Activated T-helper 1 cell treated with anti-CD3 and anti-CD28 coated beads, Interleukin-12 subunit alpha, Interleukin-12 subunit beta, Interleukin-2, Interleukin-4 antibody, amounts not matched to agents 30 ng/mL and 10 ng/mL and 1 ng/mL, durations not matched to agents 14 hours and 24 hours and 36 hours (primary cell): ENCODE measurements at regions of chr12 and their contacts with region 1.

Region 1: GRCh38 chr12:9364224-9365176 is 156.3 kb upstream of the PZP start:
- DNase-seq: peak; percentile 47
- H3K4me3 Mint-ChIP-seq: peak overlapping the region; percentile 52
- H3K27ac Mint-ChIP-seq: peak overlapping the region; percentile 69
- H3K4me1 Mint-ChIP-seq: peaks cover 55% of the 10 kb centered on the region
- H3K27me3 Mint-ChIP-seq: peaks cover 27% of the 10 kb centered on the region

Region 2: GRCh38 chr12:8648576-8649205 is 715.8 kb before region 1 on chr12:
- intact Hi-C with region 1: loop called (anchors 2 kb)
- DNase-seq: peak; percentile 67
- H3K4me3 Mint-ChIP-seq: no peak overlapping the region
- H3K27ac Mint-ChIP-seq: peak overlapping the region; percentile 54
- H3K4me1 Mint-ChIP-seq: peaks cover 45% of the 10 kb centered on the region
- H3K27me3 Mint-ChIP-seq: peaks cover 53% of the 10 kb centered on the region

Region 3: GRCh38 chr12:9244894-9245293 is 119.6 kb before region 1 on chr12:
- intact Hi-C with region 1: loop called (anchors 1 kb)
- DNase-seq: no peak
- H3K4me3 Mint-ChIP-seq: peak overlapping the region; percentile 66
- H3K27ac Mint-ChIP-seq: peak overlapping the region; percentile 95
- H3K4me1 Mint-ChIP-seq: peaks cover 23% of the 10 kb centered on the region
- H3K27me3 Mint-ChIP-seq: peaks cover 2% of the 10 kb centered on the region

Region 4: GRCh38 chr12:9347328-9348127 is 17.0 kb before region 1 on chr12:
- intact Hi-C with region 1: loop called (anchors 1 kb)
- DNase-seq: no peak
- H3K4me3 Mint-ChIP-seq: no peak overlapping the region
- H3K27ac Mint-ChIP-seq: no peak overlapping the region
- H3K4me1 Mint-ChIP-seq: peaks cover 11% of the 10 kb centered on the region
- H3K27me3 Mint-ChIP-seq: no peaks in the 10 kb centered on the region

Region 5: GRCh38 chr12:9667403-9668160 is 303.1 kb after region 1 on chr12:
- intact Hi-C with region 1: loop called (anchors 1 kb)
- DNase-seq: no peak
- H3K4me3 Mint-ChIP-seq: peak overlapping the region; percentile 90
- H3K27ac Mint-ChIP-seq: peak overlapping the region; percentile 97
- H3K4me1 Mint-ChIP-seq: peaks cover 60% of the 10 kb centered on the region
- H3K27me3 Mint-ChIP-seq: no peaks in the 10 kb centered on the region

Region 6: GRCh38 chr12:9741726-9742125 is 377.2 kb after region 1 on chr12:
- intact Hi-C with region 1: loop called (anchors 5 kb)
- DNase-seq: peak; percentile 81
- H3K4me3 Mint-ChIP-seq: peak overlapping the region; percentile 70
- H3K27ac Mint-ChIP-seq: peak overlapping the region; percentile 86
- H3K4me1 Mint-ChIP-seq: peaks cover 72% of the 10 kb centered on the region
- H3K27me3 Mint-ChIP-seq: no peaks in the 10 kb centered on the region